ENCODE measurements at regions of chr7 and their contacts with region 1.

Region 1: GRCh38 chr7:112789817-112790585 is at the start of gene TMEM168:
- DNase-seq: peak; percentile 77
- H3K4me3 Mint-ChIP-seq: peak within 1 kb of the TSS; percentile 96
- H3K27ac Mint-ChIP-seq: peak within 1 kb of the TSS; percentile 85
- H3K4me1 Mint-ChIP-seq: peaks cover 41% of the 10 kb centered on the region
- H3K27me3 Mint-ChIP-seq: no peaks in the 10 kb centered on the region
- total RNA-seq, gene TMEM168: 18.1 and 18.2 TPM in 2 replicates

Region 2: GRCh38 chr7:112510001-112510742 is 279.8 kb before region 1 on chr7:
- intact Hi-C with region 1: loop called (anchors 5 kb)
- DNase-seq: no peak
- H3K4me3 Mint-ChIP-seq: peak overlapping the region; percentile 36
- H3K27ac Mint-ChIP-seq: peak overlapping the region; percentile 22
- H3K4me1 Mint-ChIP-seq: peaks cover 31% of the 10 kb centered on the region
- H3K27me3 Mint-ChIP-seq: peaks cover 2% of the 10 kb centered on the region

Region 3: GRCh38 chr7:112723416-112723815 is 66.6 kb before region 1 on chr7:
- intact Hi-C with region 1: no loop called
- DNase-seq: no peak
- H3K4me3 Mint-ChIP-seq: no peak overlapping the region
- H3K27ac Mint-ChIP-seq: no peak overlapping the region
- H3K4me1 Mint-ChIP-seq: no peaks in the 10 kb centered on the region
- H3K27me3 Mint-ChIP-seq: peaks cover 2% of the 10 kb centered on the region

Region 4: DNA sequence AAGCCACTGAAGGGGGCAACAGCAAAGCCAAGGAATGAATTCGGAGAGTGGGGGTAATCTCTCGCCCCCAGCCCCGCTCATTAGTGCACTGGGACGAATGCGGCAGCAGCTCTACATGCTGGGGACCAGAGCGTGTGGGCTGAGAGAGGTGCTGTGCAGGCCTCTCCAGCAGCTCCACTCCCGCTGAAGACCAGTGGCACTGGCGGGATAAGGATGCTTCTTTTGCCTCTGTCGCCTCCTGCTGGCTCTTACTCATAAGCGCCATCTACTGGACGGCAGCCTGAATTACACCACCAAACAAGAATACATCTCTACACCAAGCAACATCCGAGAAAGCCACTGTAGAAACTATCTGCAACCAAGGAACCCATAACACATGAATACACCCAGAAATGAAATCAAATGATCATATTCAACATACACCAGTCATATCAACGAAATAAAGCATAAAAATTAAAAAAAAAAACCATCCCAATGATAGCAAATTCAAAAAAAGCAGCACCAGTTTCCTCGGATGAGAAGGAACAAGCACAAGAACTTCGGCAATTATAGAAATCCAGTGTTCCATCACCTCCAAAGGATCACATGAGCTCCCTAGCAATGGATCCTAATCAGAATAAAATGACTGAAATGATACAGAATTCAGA is 79.2 kb after region 1 on chr7:
- intact Hi-C with region 1: loop called (anchors 5 kb)
- DNase-seq: peak; percentile 27
- H3K4me3 Mint-ChIP-seq: no peak overlapping the region
- H3K27ac Mint-ChIP-seq: no peak overlapping the region
- H3K4me1 Mint-ChIP-seq: peaks cover 9% of the 10 kb centered on the region
- H3K27me3 Mint-ChIP-seq: no peaks in the 10 kb centered on the region

Region 5: GRCh38 chr7:112939574-112940314 is 149.7 kb after region 1 on chr7:
- intact Hi-C with region 1: loop called (anchors 1 kb)
- DNase-seq: peak; percentile 99
- H3K4me3 Mint-ChIP-seq: peak overlapping the region; percentile 91
- H3K27ac Mint-ChIP-seq: peak overlapping the region; percentile 95
- H3K4me1 Mint-ChIP-seq: peaks cover 39% of the 10 kb centered on the region
- H3K27me3 Mint-ChIP-seq: peaks cover 6% of the 10 kb centered on the region

Measured in activated T-helper 1 cell treated with anti-CD3 and anti-CD28 coated beads, Interleukin-12 subunit alpha, Interleukin-12 subunit beta, Interleukin-2, Interleukin-4 antibody, amounts not matched to agents 30 ng/mL and 10 ng/mL and 1 ng/mL, durations not matched to agents 14 hours and 24 hours and 36 hours (primary cell).